Heart right ventricle (tissue), 16 donors: ENCODE measurements at regions of chr4 and their contacts with region 1.

Region 1: DNA sequence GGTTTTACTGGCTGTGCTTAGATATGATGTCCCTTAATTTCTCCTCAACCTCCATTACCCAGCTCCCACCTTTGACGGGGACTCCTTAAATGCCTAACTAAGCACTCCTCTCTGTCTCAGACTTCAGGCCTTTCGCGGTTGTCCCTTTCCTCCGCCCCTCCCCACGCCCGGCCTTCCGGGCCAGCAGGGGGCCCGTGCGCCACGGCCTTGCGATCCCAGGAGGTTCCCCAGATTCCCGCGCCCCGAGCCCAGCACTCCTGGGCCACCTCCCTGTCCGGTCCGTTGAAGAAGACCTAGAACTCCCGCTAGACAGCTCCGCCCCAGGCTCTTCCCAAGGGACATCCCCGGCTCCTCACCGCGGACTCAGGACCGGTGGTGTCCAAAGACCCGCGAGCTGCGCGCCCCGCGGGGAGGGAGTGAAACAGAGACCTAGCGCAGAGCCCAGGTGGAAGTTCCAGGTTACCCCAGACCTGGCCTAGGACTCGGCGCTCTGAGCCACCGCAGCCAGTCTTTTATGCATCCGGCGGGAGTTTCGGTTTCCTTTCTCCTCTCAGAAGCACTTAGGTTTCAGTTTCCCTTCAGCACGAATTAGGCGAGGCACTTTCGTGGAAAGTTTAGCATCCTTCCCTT is at the start of gene DDX60:
- DNase-seq: peak; percentile 80 to 84
- ATAC-seq: peak; percentile 92 to 97 (median 96)
- H3K4me3 ChIP-seq: peak within 1 kb of the TSS; percentile 70 to 89 (median 80)
- H3K27ac ChIP-seq: peak within 1 kb of the TSS; percentile 94 to 100 (median 98)
- H3K4me1 ChIP-seq: peaks cover 0 to 26% (median 19%) of the 10 kb centered on the region in 9 donors
- H3K27me3 ChIP-seq: no peaks in the 10 kb centered on the region
- CTCF ChIP-seq: peak; percentile 34 to 69 (median 56)
- total RNA-seq, gene DDX60: 6.3 to 21.5 (median 8.4) TPM

Region 2: GRCh38 chr4:168248176-168248710 is 70.1 kb before region 1 on chr4:
- intact Hi-C with region 1: no loop called
- DNase-seq: no peak
- ATAC-seq: no peak
- H3K4me3 ChIP-seq: no peak overlapping the region
- H3K27ac ChIP-seq: no peak overlapping the region
- H3K4me1 ChIP-seq: no peaks in the 10 kb centered on the region
- H3K27me3 ChIP-seq: no peaks in the 10 kb centered on the region
- CTCF ChIP-seq: no peak

Region 3: GRCh38 chr4:168415911-168416310 is 97.5 kb after region 1 on chr4:
- intact Hi-C with region 1: no loop called
- DNase-seq: no peak
- ATAC-seq: no peak
- H3K4me3 ChIP-seq: no peak overlapping the region
- H3K27ac ChIP-seq: no peak overlapping the region
- H3K4me1 ChIP-seq: peaks cover 0 to 16% (median 4%) of the 10 kb centered on the region in 9 donors
- H3K27me3 ChIP-seq: no peaks in the 10 kb centered on the region
- CTCF ChIP-seq: no peak

Region 4: DNA sequence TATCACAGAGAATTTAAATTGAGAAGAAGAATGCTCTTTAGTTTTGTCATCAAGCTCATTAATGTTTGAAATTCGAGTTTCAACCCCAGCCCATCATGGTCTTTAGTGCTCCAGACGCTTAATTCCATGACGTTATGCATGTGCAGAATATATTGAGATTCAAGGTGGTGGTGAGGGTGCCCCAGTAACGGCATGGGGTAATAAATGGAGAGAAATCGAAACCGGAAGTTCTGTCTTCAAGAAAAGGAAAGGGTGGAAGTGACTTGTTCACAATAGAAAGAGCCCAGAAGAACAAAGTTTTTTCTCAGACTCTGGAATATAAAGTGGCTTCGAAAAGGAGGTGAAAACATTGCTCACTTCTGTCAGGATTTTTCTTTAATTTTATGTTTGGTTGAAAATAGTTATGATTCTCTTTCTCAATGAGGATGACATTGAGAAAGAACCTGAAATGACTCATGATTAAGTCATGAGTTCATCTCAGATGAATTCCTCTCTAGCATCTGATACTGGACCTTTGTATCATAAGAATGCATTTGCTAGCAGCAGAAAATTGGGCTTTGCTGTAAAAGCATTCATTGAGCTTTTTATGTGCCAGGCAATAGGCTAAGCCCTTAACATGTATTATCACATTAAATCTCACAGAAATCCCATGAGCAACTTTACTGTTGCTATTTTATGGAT is 162.7 kb after region 1 on chr4:
- intact Hi-C with region 1: loop called in 4 of 10 experiments (anchors 1 to 5 kb)
- DNase-seq: peak in 1 of 2 donors; percentile 14
- ATAC-seq: peak; percentile 34 to 78 (median 66)
- H3K4me3 ChIP-seq: peak overlapping the region; percentile 23 to 87 (median 74)
- H3K27ac ChIP-seq: peak overlapping the region; percentile 80 to 98 (median 94)
- H3K4me1 ChIP-seq: peaks cover 0 to 51% (median 16%) of the 10 kb centered on the region in 9 donors
- H3K27me3 ChIP-seq: no peaks in the 10 kb centered on the region
- CTCF ChIP-seq: no peak

Region 5: DNA sequence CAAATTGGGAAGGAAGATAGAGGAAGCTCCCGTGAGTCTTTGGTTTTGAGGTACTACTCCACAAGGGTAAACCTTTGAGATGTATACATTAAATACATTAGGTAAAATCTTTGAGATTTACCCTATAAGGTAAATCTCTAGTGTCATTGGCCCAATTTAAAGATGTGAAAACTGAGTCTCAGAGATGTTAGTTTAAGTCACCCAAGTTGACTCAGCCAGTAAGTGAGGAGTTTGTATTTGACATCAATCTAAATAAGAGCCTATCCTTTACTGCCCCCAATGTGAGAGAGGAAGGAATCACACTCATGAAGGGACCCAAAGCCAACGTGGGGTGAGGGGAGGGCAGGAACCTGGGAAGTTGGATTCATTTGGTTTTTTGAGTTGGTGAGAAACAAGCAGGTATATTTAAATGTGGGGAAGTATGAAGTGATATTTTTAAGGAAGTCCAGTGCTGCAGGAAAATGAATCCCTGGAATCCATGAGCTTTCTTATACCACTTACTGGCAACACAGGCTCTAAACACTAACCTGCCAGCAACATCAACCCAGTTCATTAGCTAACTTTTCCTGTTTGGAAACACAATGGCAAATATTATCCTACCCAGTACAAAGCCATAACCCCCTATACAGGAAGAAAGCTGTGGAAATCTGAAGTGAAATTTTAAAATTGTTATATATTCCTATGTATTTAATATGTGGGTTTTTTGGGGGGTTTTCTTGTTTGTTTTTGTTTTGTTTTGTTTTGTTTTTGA is 233.7 kb after region 1 on chr4:
- intact Hi-C with region 1: loop called in 1 of 10 experiments (anchors 5 kb)
- DNase-seq: no peak
- ATAC-seq: no peak
- H3K4me3 ChIP-seq: no peak overlapping the region
- H3K27ac ChIP-seq: no peak overlapping the region
- H3K4me1 ChIP-seq: peaks cover 0 to 24% (median 12%) of the 10 kb centered on the region in 9 donors
- H3K27me3 ChIP-seq: no peaks in the 10 kb centered on the region
- CTCF ChIP-seq: peak in 5 of 9 donors; percentile 8 to 33 (median 21)